ENCODE measurements at regions of chr16 and their contacts with region 1.

Region 1: GRCh38 chr16:77236063-77236511 is 36.9 kb downstream of the SYCE1L start:
- DNase-seq: peak; percentile 71
- ATAC-seq: peak; percentile 99
- H3K4me3 ChIP-seq: no peak overlapping the region
- H3K27ac ChIP-seq: no peak overlapping the region
- H3K4me1 ChIP-seq: no peaks in the 10 kb centered on the region
- H3K27me3 ChIP-seq: peaks cover 2% of the 10 kb centered on the region; the same call in 1 of the 2 replicates
- CTCF ChIP-seq: peak; percentile 100; the same call in 1 of the 2 replicates
- POLR2A ChIP-seq: peak; percentile 73
- RAD21 ChIP-seq: peak; percentile 100

Region 2: GRCh38 chr16:77191259-77191969 is 44.7 kb before region 1 on chr16:
- CTCF ChIA-PET with region 1: no interaction called
- POLR2A ChIA-PET with region 1: no interaction called
- dilution Hi-C with region 1: no loop called
- in situ Hi-C with region 1: no loop called
- intact Hi-C with region 1: no loop called
- DNase-seq: no peak
- ATAC-seq: peak; percentile 2
- H3K4me3 ChIP-seq: peak overlapping the region; percentile 52
- H3K27ac ChIP-seq: peak overlapping the region; percentile 86
- H3K4me1 ChIP-seq: no peaks in the 10 kb centered on the region
- H3K27me3 ChIP-seq: no peaks in the 10 kb centered on the region
- CTCF ChIP-seq: no peak
- POLR2A ChIP-seq: no peak; the same call in 1 of the 2 replicates
- RAD21 ChIP-seq: no peak

Region 3: GRCh38 chr16:77376358-77376757 is 140.3 kb after region 1 on chr16:
- CTCF ChIA-PET with region 1: no interaction called
- POLR2A ChIA-PET with region 1: no interaction called
- dilution Hi-C with region 1: no loop called
- in situ Hi-C with region 1: no loop called
- intact Hi-C with region 1: loop called (anchors 2 kb)
- DNase-seq: no peak
- ATAC-seq: no peak
- H3K4me3 ChIP-seq: no peak overlapping the region
- H3K27ac ChIP-seq: no peak overlapping the region
- H3K4me1 ChIP-seq: no peaks in the 10 kb centered on the region
- H3K27me3 ChIP-seq: no peaks in the 10 kb centered on the region
- CTCF ChIP-seq: no peak; the same call in 1 of the 2 replicates
- POLR2A ChIP-seq: no peak
- RAD21 ChIP-seq: no peak

Region 4: DNA sequence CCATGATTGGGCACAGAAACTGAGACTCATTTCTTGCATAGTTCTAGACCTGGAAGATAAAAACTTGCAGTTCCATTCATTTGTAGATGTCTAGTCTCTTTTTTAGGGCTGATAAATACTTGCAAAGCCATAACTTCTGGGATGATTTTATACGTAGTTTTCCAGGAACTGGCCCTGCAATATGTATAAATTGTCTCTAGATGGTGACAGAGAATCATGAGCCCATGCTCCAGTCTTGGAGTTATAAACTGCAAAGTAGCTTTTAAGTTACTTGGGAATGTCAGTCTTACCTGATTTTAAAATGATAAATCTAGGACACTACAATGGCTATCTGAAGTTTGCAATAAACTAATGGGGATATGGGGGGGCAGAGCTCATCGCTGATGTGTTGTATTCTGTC is 201.8 kb after region 1 on chr16:
- CTCF ChIA-PET with region 1: no interaction called
- POLR2A ChIA-PET with region 1: no interaction called
- dilution Hi-C with region 1: no loop called
- in situ Hi-C with region 1: no loop called
- intact Hi-C with region 1: loop called (anchors 5 kb)
- DNase-seq: no peak
- ATAC-seq: no peak
- H3K4me3 ChIP-seq: no peak overlapping the region
- H3K27ac ChIP-seq: no peak overlapping the region
- H3K4me1 ChIP-seq: no peaks in the 10 kb centered on the region
- H3K27me3 ChIP-seq: peaks cover 12% of the 10 kb centered on the region
- CTCF ChIP-seq: no peak
- POLR2A ChIP-seq: no peak
- RAD21 ChIP-seq: no peak

Region 5: DNA sequence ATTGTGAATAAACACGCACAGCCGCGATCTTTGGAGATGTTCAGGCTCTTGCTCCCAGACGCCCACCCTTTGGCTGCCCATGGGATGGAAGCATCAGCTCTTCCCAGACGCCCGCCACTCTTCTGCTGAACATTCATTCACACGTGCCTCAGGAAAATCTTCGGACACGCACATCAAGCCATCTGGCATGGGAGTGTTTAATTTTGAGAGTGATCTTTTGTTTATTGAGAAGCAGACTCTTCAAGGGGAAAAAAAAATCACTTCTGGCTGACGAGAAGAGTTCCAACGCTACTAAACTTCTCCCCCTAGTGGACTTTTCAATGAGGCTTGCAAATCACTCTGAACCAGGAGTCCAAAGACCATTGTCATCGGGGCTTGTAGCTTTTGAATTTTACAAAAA is 424.2 kb after region 1 on chr16:
- CTCF ChIA-PET with region 1: interaction called, 4 read pairs
- POLR2A ChIA-PET with region 1: no interaction called
- dilution Hi-C with region 1: no loop called
- in situ Hi-C with region 1: no loop called
- intact Hi-C with region 1: loop called (anchors 1 kb)
- DNase-seq: peak; percentile 52
- ATAC-seq: peak; percentile 67
- H3K4me3 ChIP-seq: no peak overlapping the region
- H3K27ac ChIP-seq: no peak overlapping the region
- H3K4me1 ChIP-seq: no peaks in the 10 kb centered on the region
- H3K27me3 ChIP-seq: no peaks in the 10 kb centered on the region; the same call in 1 of the 2 replicates
- CTCF ChIP-seq: peak; percentile 52
- POLR2A ChIP-seq: no peak
- RAD21 ChIP-seq: peak; percentile 39

Region 6: GRCh38 chr16:78002915-78003538 is 766.9 kb after region 1 on chr16:
- CTCF ChIA-PET with region 1: no interaction called
- POLR2A ChIA-PET with region 1: no interaction called
- dilution Hi-C with region 1: no loop called
- in situ Hi-C with region 1: loop called (anchors 25 kb)
- intact Hi-C with region 1: loop called (anchors 1 kb)
- DNase-seq: peak; percentile 90
- ATAC-seq: peak; percentile 98
- H3K4me3 ChIP-seq: no peak overlapping the region
- H3K27ac ChIP-seq: no peak overlapping the region
- H3K4me1 ChIP-seq: no peaks in the 10 kb centered on the region
- H3K27me3 ChIP-seq: peaks cover 4% of the 10 kb centered on the region
- CTCF ChIP-seq: peak; percentile 99
- POLR2A ChIP-seq: no peak
- RAD21 ChIP-seq: peak; percentile 95